ENCODE measurements at regions of chr20 and their contacts with region 1.

Region 1: GRCh38 chr20:38658879-38659596 is 57.4 kb downstream of the ARHGAP40 start:
- DNase-seq: peak; percentile 45
- H3K4me3 ChIP-seq: no peak overlapping the region; a peak in 1 of 4 replicates
- H3K27ac ChIP-seq: no peak overlapping the region
- H3K4me1 ChIP-seq: no peaks in the 10 kb centered on the region
- H3K27me3 ChIP-seq: no peaks in the 10 kb centered on the region
- CTCF ChIP-seq: peak; percentile 22; the same call in 1 of the 2 replicates
- EP300 ChIP-seq: no peak
- RAD21 ChIP-seq: peak; percentile 41

Region 2: GRCh38 chr20:38504368-38505090 is 154.5 kb before region 1 on chr20:
- CTCF ChIA-PET with region 1: no interaction called
- POLR2A ChIA-PET with region 1: no interaction called
- DNase-seq: no peak
- H3K4me3 ChIP-seq: no peak overlapping the region
- H3K27ac ChIP-seq: no peak overlapping the region
- H3K4me1 ChIP-seq: no peaks in the 10 kb centered on the region; a peak in 1 of 4 replicates
- H3K27me3 ChIP-seq: no peaks in the 10 kb centered on the region
- CTCF ChIP-seq: no peak
- EP300 ChIP-seq: no peak
- RAD21 ChIP-seq: no peak

Region 3: GRCh38 chr20:38674092-38674764 is 15.2 kb after region 1 on chr20:
- CTCF ChIA-PET with region 1: interaction called, 21 read pairs
- POLR2A ChIA-PET with region 1: interaction called, 3 read pairs
- DNase-seq: peak; percentile 99
- H3K4me3 ChIP-seq: peak overlapping the region; percentile 59 to 76
- H3K27ac ChIP-seq: peak overlapping the region in 1 of 2 experiments; percentile 53; a peak in 1 of 4 replicates
- H3K4me1 ChIP-seq: peaks cover 0 to 15% of the 10 kb centered on the region in 2 experiments; a peak in 1 of 4 replicates
- H3K27me3 ChIP-seq: no peaks in the 10 kb centered on the region
- CTCF ChIP-seq: no peak
- EP300 ChIP-seq: no peak
- RAD21 ChIP-seq: no peak

Region 4: GRCh38 chr20:38692436-38693411 is 33.7 kb after region 1 on chr20:
- CTCF ChIA-PET with region 1: interaction called, 11 read pairs
- POLR2A ChIA-PET with region 1: no interaction called
- DNase-seq: peak; percentile 73
- H3K4me3 ChIP-seq: no peak overlapping the region
- H3K27ac ChIP-seq: peak overlapping the region in 1 of 2 experiments; percentile 58; a peak in 2 of 4 replicates
- H3K4me1 ChIP-seq: peaks cover 0 to 20% of the 10 kb centered on the region in 2 experiments; a peak in 1 of 4 replicates
- H3K27me3 ChIP-seq: no peaks in the 10 kb centered on the region
- CTCF ChIP-seq: no peak
- EP300 ChIP-seq: peak in 1 of 2 experiments; percentile 75; a peak in 2 of 4 replicates
- RAD21 ChIP-seq: no peak